ENCODE measurements at regions of chr7 and their contacts with region 1.

Region 1: DNA sequence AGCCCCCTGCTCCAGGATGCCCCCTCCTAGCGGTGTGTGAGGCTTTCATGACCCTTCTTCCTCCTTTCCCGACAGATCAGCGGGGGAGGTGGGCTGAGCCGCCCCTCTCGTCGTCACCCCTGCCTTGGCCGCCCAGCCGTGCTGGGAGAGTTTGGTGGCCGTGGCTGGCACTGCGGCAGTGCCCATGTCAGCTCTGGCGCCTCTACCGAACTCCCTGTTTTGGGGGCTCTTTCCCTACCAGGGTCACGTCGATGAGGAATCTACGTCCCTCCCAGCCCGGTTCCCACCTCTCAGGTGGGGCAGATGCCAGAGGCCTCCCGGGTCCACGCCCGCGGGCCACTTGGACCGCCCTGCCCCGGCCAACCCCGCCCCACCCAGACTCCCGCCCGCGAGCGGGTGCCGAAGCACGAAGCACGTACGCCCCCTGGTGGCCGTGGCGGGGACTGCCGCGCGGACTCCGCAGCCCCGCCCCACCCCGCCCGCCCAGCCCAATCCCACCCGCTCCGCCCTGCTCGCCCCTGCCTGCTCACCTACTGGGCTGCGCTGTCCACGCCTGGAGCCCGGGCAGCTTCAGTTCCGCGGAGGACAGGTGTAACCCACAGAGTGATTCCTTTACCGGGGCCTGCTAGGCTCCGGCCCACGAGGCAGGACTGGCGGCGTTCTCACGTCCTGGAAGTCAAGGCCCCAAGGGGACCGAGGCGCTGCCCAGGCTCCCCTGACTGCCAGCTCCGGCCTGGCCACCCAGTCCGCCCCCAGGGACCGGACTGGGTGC is 127.1 kb downstream of the UBE2H start:
- DNase-seq: peak; percentile 88 to 96 (median 96)
- ATAC-seq: peak; percentile 87 to 90
- H3K4me3 ChIP-seq: peak overlapping the region; percentile 46
- H3K27ac ChIP-seq: no peak overlapping the region
- H3K4me1 ChIP-seq: peaks cover 4% of the 10 kb centered on the region
- H3K27me3 ChIP-seq: no peaks in the 10 kb centered on the region

Region 2: GRCh38 chr7:129664029-129665012 is 161.4 kb before region 1 on chr7:
- intact Hi-C with region 1: loop called (anchors 5 to 10 kb)
- DNase-seq: no peak
- ATAC-seq: peak in 1 of 2 donors; percentile 41
- H3K4me3 ChIP-seq: no peak overlapping the region
- H3K27ac ChIP-seq: no peak overlapping the region
- H3K4me1 ChIP-seq: no peaks in the 10 kb centered on the region
- H3K27me3 ChIP-seq: no peaks in the 10 kb centered on the region

Region 3: DNA sequence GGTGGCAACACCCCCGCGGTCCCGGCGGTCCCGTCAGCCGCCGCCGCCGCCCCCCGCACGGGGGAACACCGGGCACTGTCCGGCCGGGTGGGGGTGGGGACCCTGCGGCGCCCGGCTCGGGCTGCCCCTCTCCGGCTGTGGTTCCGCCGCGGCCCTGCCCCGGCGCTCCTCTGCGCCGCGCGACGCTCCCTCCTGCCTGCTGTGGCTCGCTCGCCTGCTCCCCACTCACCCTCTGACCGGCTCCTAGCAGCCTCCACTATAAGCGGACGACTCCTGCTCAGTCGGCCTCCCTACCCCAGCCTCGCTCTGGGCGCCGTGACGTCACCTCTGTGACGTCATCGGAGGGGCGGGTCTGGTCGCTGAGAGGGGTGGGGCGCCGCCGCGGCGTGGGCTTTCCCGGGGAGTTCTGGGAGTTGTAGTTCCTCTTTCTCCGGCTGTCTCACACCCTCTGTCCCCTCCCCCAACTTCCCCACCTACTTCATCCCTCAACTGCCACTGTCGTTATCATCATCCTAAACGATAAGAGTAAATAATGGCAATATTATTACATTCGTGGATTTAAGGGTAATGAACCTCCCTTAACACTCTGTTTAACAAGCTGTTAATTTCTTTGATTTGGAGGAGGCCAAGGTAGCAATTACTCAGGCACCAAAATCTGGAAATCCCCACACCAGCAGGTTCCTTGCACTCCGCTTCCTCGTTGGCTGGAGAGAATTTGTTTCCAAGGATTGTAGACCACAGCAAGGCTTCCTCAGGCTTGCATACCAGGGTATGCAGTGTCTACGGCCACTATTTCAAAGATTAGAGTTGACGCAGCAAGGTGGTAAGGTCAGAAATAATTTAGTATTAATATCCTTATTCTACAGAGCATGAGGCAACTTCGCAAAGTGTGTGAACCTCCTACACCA is 127.2 kb after region 1 on chr7 and contains the start of gene UBE2H:
- intact Hi-C with region 1: loop called in 2 of 4 experiments (anchors 5 to 10 kb)
- DNase-seq: peak; percentile 89 to 97 (median 97)
- ATAC-seq: peak; percentile 92 to 93
- H3K4me3 ChIP-seq: peak within 1 kb of the TSS; percentile 91
- H3K27ac ChIP-seq: peak within 1 kb of the TSS; percentile 92
- H3K4me1 ChIP-seq: peaks cover 5% of the 10 kb centered on the region
- H3K27me3 ChIP-seq: no peaks in the 10 kb centered on the region
- total RNA-seq, gene UBE2H: 59.9 to 79.0 (median 72.0) TPM

Region 4: DNA sequence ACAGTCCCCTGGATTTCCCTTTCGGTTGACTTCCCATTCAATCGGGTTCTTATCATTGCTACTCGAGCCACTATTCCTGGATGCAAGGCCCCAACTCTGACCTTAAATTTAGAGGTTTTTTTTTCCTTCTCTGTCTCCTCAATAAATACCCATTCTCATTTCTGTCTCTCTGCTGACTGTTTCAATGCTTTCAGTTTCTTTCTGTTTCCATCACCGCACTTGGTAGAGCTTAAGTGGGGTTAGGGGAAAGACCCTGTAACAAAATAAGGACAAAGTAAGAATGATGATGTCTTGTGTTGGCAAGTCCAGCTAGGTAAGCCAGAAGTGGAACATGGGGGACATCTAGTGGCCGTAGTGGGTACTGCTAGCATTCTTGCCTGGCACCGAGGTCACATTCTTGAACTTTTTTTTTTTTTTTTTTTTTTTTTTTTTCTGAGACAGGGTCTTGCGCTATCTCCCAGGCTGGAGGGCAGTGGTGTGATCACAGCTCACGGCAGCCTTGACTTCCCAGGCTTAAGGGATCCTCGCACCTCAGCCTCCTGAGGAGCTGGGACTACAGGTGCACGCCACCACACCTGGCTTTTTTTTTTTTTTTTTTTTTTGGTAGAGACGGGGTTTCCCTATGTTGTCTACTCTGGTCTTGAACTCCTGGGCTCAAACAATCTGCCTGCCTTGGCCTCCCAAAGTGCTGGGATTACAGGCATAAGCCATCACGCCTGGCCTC is 185.2 kb after region 1 on chr7:
- intact Hi-C with region 1: loop called (anchors 2 to 5 kb)
- DNase-seq: peak; percentile 68 to 92 (median 80)
- ATAC-seq: peak; percentile 56 to 64
- H3K4me3 ChIP-seq: no peak overlapping the region
- H3K27ac ChIP-seq: no peak overlapping the region
- H3K4me1 ChIP-seq: no peaks in the 10 kb centered on the region
- H3K27me3 ChIP-seq: no peaks in the 10 kb centered on the region

Measured in right cardiac atrium (tissue), 5 donors.